ENCODE measurements at regions of chr1 and their contacts with region 1.

Region 1: GRCh38 chr1:89454845-89455521 is 69.6 kb upstream of the LRRC8B start:
- DNase-seq: peak; percentile 77
- ATAC-seq: peak; percentile 43
- H3K4me3 Mint-ChIP-seq: no peak overlapping the region
- H3K27ac Mint-ChIP-seq: no peak overlapping the region
- H3K4me1 Mint-ChIP-seq: peaks cover 27% of the 10 kb centered on the region
- H3K27me3 Mint-ChIP-seq: peaks cover 26% of the 10 kb centered on the region

Region 2: DNA sequence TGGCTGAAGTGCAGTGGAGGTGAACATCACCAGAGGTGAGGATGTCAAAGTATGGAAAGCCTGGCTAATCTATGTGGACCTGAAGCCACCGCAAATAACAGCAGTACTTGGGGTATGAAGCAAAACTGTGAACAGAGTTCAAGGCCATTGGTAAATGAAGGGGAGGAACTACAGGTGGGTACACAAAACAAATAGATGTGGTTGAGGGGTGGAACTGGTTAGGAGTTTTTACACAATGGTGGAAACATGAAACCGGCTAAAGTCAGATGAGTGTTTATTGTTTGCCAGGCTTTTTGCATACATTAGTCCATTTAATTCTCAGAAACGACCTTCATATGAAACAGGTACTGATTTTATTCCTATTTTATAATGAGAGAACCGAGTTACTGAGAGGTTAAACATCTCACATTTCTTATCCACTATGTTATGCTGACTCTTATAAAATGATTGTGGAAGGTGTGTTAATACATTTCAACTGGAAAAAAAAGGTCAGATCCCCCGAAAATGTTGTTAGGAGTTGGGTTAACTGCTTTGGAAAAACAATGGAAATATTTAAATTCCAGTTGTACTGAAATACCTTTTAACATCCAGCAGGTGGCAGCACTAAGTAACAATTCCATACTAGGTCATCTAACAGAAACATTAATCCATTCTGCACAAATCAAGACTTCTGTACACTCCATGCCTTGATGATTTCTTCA is 519.3 kb before region 1 on chr1:
- CTCF ChIA-PET with region 1: no interaction called
- POLR2A ChIA-PET with region 1: no interaction called
- intact Hi-C with region 1: loop called in 1 of 2 experiments (anchors 2 kb)
- DNase-seq: peak; percentile 11
- ATAC-seq: peak; percentile 53
- H3K4me3 Mint-ChIP-seq: no peak overlapping the region
- H3K27ac Mint-ChIP-seq: no peak overlapping the region
- H3K4me1 Mint-ChIP-seq: no peaks in the 10 kb centered on the region
- H3K27me3 Mint-ChIP-seq: no peaks in the 10 kb centered on the region

Region 3: DNA sequence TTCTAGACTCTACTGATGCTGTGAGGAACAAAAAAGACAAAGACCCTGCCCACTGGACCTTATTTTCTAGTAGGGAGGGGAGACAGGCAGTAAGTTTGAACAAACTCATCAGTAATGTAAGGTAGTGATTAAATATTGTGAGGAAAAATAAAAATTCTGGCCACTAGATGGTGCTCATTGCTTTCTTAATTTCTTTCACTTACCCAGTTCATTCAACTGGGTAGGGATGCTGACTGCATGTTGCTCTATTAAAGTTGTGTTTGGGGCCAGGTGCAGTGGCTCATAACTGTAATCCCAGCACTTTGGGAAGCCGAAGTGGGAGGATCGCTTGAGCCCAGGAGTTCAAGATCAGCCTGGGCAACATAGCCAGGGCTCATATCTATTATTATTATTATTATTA is 456.3 kb before region 1 on chr1:
- CTCF ChIA-PET with region 1: interaction called, 10 read pairs
- POLR2A ChIA-PET with region 1: no interaction called
- intact Hi-C with region 1: loop called (anchors 1 kb)
- DNase-seq: peak; percentile 22
- ATAC-seq: peak; percentile 88
- H3K4me3 Mint-ChIP-seq: no peak overlapping the region
- H3K27ac Mint-ChIP-seq: no peak overlapping the region
- H3K4me1 Mint-ChIP-seq: peaks cover 31% of the 10 kb centered on the region
- H3K27me3 Mint-ChIP-seq: peaks cover 5% of the 10 kb centered on the region

Region 4: GRCh38 chr1:89125913-89126580 is 328.9 kb before region 1 on chr1 and contains the start of gene GBP2:
- CTCF ChIA-PET with region 1: no interaction called
- POLR2A ChIA-PET with region 1: no interaction called
- intact Hi-C with region 1: loop called (anchors 1 to 2 kb)
- DNase-seq: peak; percentile 50
- ATAC-seq: peak; percentile 77
- H3K4me3 Mint-ChIP-seq: peak within 1 kb of the TSS; percentile 87
- H3K27ac Mint-ChIP-seq: peak within 1 kb of the TSS; percentile 99
- H3K4me1 Mint-ChIP-seq: peaks cover 52% of the 10 kb centered on the region
- H3K27me3 Mint-ChIP-seq: no peaks in the 10 kb centered on the region
- total RNA-seq, gene GBP2: 253 to 294 TPM

Region 5: DNA sequence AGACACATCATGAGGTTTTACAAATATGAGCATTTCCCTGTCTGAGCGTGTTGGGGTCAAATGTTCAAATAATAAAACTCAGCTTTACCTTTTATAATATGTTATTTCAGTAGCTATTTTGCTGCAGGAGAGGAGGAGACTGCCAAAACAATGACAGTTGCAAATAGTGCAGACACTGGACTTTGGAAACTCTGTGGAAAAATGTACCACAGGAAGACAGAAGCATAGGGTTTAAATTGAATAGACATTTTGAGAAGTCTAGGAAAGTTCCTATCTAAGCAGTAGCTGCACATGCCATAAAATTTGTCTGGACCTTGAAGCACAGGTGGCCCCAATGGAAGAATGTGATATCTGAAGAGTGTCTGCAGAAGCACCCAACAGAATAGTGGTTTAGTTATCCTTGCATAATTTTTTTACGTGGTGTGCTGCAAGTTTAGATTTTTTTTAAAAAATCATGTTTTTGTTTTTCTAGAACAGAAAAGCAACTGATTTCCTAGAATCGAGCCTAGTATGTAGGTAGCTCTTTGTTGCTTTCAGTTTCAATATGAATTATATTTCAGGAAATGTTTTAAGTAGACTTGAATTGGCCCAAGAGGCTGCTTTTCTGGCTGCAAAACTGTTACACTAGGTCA is 168.3 kb before region 1 on chr1:
- CTCF ChIA-PET with region 1: no interaction called
- POLR2A ChIA-PET with region 1: no interaction called
- intact Hi-C with region 1: loop called (anchors 1 to 5 kb)
- DNase-seq: no peak
- ATAC-seq: peak; percentile 77
- H3K4me3 Mint-ChIP-seq: peak overlapping the region; percentile 44
- H3K27ac Mint-ChIP-seq: peak overlapping the region; percentile 93
- H3K4me1 Mint-ChIP-seq: peaks cover 74% of the 10 kb centered on the region
- H3K27me3 Mint-ChIP-seq: no peaks in the 10 kb centered on the region

Region 6: DNA sequence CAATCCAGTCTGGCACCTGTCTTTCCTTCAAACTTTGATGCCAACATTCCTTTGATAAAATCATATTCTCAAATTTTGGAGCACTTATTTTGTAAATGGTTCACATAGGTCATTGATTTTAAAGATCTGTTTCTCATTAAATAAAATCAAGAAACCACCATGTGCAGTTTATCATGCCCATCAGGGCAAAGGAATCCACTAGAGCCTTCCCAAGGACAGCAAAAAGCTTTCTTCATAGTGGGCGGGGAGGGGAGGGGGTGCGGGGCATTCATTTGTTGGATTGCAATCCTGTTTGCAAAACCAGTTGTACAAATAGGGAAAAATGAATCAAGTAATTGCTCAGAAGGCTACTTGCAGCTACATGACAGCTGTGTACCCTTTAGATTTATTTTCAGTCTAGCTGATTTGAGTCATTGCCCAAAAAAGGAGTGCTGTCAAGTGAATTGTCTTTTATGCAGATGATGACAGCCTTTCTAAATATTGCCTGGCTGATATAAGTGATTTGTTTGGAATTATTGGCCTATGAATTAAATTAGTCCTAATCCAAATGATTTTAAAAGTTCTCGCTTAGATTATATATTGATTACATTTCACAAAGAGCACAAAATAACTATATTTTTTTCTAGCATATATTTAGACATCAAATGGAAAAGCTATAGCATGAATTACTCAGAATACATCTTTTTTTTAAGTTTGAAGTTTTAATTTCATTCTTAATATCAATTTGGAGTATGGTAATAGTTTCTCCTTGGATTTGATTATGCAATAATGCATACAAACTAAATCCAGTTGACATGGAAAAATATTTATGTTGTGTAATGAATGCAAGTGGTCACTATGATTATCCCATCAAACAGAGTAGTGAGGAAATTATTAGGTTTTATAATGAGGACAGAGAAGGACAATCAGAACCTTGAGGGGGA is 92.8 kb after region 1 on chr1:
- CTCF ChIA-PET with region 1: no interaction called
- POLR2A ChIA-PET with region 1: no interaction called
- intact Hi-C with region 1: loop called in 1 of 2 experiments (anchors 1 kb)
- DNase-seq: peak; percentile 70
- ATAC-seq: peak; percentile 48
- H3K4me3 Mint-ChIP-seq: peak overlapping the region; percentile 20
- H3K27ac Mint-ChIP-seq: peak overlapping the region; percentile 95
- H3K4me1 Mint-ChIP-seq: peaks cover 86% of the 10 kb centered on the region
- H3K27me3 Mint-ChIP-seq: no peaks in the 10 kb centered on the region

Region 7: DNA sequence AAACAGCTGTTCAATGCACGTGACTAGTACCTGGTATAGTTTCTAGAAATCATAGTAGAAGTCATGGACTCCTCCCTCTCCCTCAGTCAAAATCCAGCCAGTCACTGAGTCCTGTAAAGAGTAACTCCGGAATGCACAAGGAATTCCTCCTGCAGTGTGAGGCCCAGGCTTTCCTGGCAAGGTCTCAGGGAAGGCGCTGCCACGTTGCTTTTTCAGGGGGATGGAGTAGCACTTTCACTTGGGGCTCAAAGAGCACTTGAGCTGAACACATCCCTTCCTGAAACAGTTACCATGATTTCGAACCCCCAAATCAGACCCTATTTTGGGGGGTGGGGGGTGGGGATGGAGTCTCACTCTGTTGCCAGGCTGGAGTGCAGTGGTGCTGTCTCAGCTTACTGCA is 339.4 kb after region 1 on chr1:
- CTCF ChIA-PET with region 1: no interaction called
- POLR2A ChIA-PET with region 1: no interaction called
- intact Hi-C with region 1: no loop called
- DNase-seq: no peak
- ATAC-seq: no peak
- H3K4me3 Mint-ChIP-seq: no peak overlapping the region
- H3K27ac Mint-ChIP-seq: no peak overlapping the region
- H3K4me1 Mint-ChIP-seq: peaks cover 3% of the 10 kb centered on the region
- H3K27me3 Mint-ChIP-seq: peaks cover 3% of the 10 kb centered on the region